ENCODE measurements at regions of chr15 and their contacts with region 1.

Region 1: GRCh38 chr15:78437762-78438302 is at the start of gene IREB2:
- DNase-seq: peak; percentile 99
- H3K4me3 ChIP-seq: peak within 1 kb of the TSS; percentile 87
- H3K27ac ChIP-seq: peak within 1 kb of the TSS; percentile 82
- H3K4me1 ChIP-seq: peaks cover 45% of the 10 kb centered on the region
- CTCF ChIP-seq: no peak
- total RNA-seq, gene IREB2: 22.7 and 27.1 TPM in 2 replicates

Region 2: DNA sequence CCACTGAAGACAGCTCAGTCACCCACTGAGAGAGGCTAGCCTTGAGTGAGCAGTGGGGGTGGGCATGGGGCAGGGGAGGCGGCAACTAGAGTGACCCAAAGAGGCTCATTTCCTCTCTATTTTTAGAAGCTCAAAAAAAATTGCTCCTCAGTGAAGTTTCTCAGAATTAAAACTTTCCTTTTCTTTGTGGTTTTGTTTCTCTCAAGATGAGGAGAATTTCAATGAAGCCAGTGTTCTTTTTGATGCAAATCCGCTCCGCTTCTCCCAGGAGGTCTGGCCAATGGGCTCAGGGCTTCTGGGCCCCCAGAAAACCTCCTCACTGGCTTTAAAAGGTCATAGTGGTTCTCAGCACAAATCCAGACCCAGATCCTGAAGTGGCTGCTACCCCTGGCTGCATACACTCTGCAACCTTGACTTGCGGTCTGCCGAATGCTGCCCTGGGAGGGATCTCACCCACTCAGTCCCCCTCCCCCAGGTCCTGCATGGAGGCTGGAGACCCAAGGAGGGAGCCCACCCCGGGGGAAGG is 203.3 kb before region 1 on chr15 and contains the start of gene ACSBG1:
- CTCF ChIA-PET with region 1: no interaction called
- POLR2A ChIA-PET with region 1: no interaction called
- intact Hi-C with region 1: no loop called
- DNase-seq: no peak
- H3K4me3 ChIP-seq: no peak within 1 kb of the TSS
- H3K27ac ChIP-seq: no peak within 1 kb of the TSS
- H3K4me1 ChIP-seq: no peaks in the 10 kb centered on the region
- CTCF ChIP-seq: no peak
- total RNA-seq, gene ACSBG1: 0.31 and 0.41 TPM in 2 replicates

Region 3: GRCh38 chr15:78299101-78299930 is 138.5 kb before region 1 on chr15 and contains the start of gene SKIC8:
- CTCF ChIA-PET with region 1: no interaction called
- POLR2A ChIA-PET with region 1: interaction called, 16 read pairs
- intact Hi-C with region 1: no loop called
- DNase-seq: peak; percentile 94
- H3K4me3 ChIP-seq: peak within 1 kb of the TSS; percentile 96
- H3K27ac ChIP-seq: peak within 1 kb of the TSS; percentile 32
- H3K4me1 ChIP-seq: peaks cover 21% of the 10 kb centered on the region
- CTCF ChIP-seq: no peak
- total RNA-seq, gene SKIC8: 57.4 and 66.8 TPM in 2 replicates

Region 4: GRCh38 chr15:78872972-78873792 is 435.4 kb after region 1 on chr15:
- CTCF ChIA-PET with region 1: no interaction called
- POLR2A ChIA-PET with region 1: no interaction called
- intact Hi-C with region 1: loop called (anchors 10 kb)
- DNase-seq: peak; percentile 96
- H3K4me3 ChIP-seq: peak overlapping the region; percentile 88
- H3K27ac ChIP-seq: peak overlapping the region; percentile 87
- H3K4me1 ChIP-seq: peaks cover 30% of the 10 kb centered on the region
- CTCF ChIP-seq: peak; percentile 77

Measured in OCI-LY7 (cell line).